ENCODE measurements at regions of chrX and their contacts with region 1.

Region 1: DNA sequence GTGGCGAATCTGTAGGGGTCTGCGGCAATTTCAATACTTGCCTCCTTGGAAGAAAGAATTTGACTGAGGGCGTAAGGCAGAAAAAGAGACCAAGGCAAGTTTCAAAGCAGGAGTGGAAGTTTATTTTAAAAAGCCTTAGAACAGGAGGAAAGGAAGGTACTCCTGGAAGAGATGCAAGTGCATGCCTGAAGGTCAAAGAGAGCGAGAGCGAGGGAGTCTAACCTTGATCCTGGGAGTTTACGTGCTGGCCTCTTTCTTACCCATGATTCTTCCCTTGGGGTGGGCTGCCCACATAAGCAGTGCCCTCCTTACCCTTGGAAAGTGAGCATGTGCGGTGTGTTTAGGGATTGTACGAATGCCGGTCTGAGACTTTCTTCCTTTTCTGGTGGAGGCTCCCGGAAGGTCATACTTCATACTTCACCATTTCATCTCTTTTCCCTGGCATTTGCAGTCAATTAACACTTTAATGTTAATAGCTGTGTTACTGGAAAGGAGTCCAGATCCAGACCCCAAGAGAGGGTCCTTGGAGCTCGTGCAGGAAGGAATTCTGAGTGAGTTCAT is 40.0 kb downstream of the ARSD start:
- DNase-seq: no peak
- H3K4me3 Mint-ChIP-seq: peak overlapping the region; percentile 68
- H3K27ac Mint-ChIP-seq: no peak overlapping the region
- H3K4me1 Mint-ChIP-seq: peaks cover 10% of the 10 kb centered on the region
- H3K27me3 Mint-ChIP-seq: peaks cover 10% of the 10 kb centered on the region

Region 2: GRCh38 chrX:2875798-2876399 is 13.2 kb before region 1 on chrX:
- CTCF ChIA-PET with region 1: no interaction called
- intact Hi-C with region 1: no loop called
- DNase-seq: no peak
- H3K4me3 Mint-ChIP-seq: no peak overlapping the region
- H3K27ac Mint-ChIP-seq: no peak overlapping the region
- H3K4me1 Mint-ChIP-seq: no peaks in the 10 kb centered on the region
- H3K27me3 Mint-ChIP-seq: peaks cover 6% of the 10 kb centered on the region

Region 3: DNA sequence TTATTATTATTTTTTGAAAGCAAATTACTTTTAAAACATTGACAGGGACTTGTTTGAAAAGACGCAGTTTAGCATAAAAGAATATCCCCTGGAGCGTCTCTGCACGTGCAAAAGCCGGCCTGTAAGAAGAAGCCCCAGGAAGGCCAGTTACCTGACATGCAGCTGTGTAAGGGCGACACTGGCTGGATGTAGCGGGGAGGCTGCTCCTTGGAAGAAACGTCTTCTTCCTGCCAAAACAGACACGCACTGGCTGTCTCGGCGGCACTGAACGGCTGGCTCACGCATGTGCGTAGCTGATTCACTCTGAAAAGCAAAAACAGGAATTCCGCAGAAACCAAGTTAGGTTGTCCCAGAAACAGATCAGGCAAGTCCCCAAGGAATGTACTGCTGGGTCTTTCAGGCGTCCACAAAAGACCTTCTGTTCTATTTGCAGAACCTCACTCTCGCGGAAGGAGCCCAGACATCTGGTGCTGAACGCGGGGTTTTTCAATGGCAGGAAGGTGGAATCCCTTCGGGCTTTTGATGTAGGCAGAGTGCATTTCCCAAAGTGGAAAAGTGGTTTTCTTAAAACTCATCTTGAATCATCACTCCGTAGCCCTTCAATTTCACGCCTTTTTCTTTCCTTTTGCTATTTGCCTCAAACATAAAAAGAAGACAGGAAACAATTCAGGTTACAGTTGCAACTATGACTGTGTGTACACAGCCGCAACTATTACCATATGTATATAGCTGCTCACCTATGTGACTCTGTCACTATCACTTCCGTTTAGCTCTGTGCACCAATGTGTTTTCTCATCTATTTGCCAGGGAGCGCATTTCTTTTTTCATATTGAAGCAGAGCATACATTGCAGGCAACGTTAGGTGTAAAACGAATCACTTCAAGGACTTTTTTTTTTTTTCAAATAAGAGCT is 79.1 kb after region 1 on chrX:
- CTCF ChIA-PET with region 1: no interaction called
- intact Hi-C with region 1: loop called (anchors 1 kb)
- DNase-seq: peak; percentile 61
- H3K4me3 Mint-ChIP-seq: peak overlapping the region; percentile 24
- H3K27ac Mint-ChIP-seq: peak overlapping the region; percentile 76
- H3K4me1 Mint-ChIP-seq: peaks cover 10% of the 10 kb centered on the region
- H3K27me3 Mint-ChIP-seq: no peaks in the 10 kb centered on the region